Ovary (tissue), 10 donors: ENCODE measurements at regions of chrX and their contacts with region 1.

Region 1: DNA sequence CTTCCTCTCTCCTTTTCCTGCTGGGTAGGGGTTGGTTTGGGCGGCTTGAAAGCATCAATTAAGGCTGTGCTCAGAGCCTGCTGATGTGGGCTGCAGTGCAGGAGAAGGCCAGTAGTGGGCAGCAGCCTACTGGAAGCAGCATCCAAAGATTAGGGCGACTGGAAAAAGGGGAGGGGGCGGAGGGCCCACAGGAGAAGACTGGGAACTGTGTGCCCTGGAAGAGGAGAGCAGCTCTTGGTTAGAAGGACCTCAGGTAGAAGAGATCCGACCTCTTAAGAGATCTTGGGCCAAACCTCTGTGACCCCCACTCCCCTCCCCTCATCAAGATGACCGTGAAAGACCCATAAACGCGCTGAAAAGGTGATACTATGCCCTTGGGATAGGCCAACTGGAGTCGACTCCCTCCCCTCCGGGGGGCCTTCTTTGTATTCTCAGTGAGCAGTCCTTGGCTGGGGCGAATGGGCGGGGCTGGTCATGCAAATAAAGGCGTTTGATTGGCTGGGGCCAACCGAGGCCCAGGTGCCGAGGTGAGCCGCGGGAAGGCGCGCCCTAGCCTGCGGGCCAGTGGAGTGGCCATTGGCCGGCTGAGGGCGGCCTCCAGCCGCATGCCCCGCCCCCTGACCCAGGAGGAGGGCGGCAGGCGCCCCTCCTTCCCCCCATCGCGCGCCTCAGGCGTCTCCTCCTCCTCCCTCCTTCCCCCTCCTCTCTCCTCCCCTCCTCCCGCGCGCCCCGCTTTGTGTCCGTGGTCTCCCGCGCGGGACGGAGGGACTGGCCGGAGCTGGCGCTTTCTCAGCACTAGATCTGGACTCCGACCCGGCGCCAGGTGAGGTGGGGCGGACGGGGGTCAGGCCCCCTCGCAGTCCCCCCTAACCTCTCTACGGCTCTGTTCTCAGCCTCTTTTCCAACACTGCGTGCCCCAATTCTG is 10.1 kb downstream of the DLG3 start:
- DNase-seq: peak; percentile 81 to 85 (median 85)
- H3K4me3 ChIP-seq: peak overlapping the region; percentile 35
- H3K27ac ChIP-seq: peak overlapping the region; percentile 60 to 81
- H3K4me1 ChIP-seq: no peaks in the 10 kb centered on the region
- H3K27me3 ChIP-seq: no peaks in the 10 kb centered on the region
- CTCF ChIP-seq: peak; percentile 49 to 71 (median 70)
- EP300 ChIP-seq: no peak
- POLR2A ChIP-seq: no peak

Region 2: DNA sequence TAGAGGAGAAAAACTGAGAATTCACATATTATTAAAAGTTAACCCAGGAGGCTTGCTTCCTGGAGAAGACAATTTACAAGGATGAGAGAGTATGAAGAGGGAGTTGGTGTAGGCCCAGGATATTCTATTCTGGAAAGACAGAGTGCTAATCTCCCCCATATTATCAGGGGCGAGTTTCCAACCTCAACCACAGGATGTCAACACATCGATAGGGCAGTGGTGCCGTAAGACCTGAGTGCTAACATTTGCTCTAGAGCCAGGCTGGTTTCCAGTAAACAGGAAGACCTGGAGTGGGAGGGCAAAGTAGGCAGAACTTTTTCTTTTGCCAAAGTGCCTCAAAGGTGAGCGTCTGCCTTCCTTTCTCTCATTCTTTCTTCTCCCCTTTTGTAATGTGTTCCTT is 223.0 kb before region 1 on chrX:
- intact Hi-C with region 1: no loop called
- DNase-seq: no peak
- H3K4me3 ChIP-seq: no peak overlapping the region
- H3K27ac ChIP-seq: no peak overlapping the region
- H3K4me1 ChIP-seq: no peaks in the 10 kb centered on the region
- H3K27me3 ChIP-seq: no peaks in the 10 kb centered on the region
- CTCF ChIP-seq: no peak
- EP300 ChIP-seq: no peak
- POLR2A ChIP-seq: no peak

Region 3: GRCh38 chrX:70554081-70554480 is 99.4 kb after region 1 on chrX:
- intact Hi-C with region 1: loop called in 2 of 4 experiments (anchors 10 kb)
- DNase-seq: no peak
- H3K4me3 ChIP-seq: no peak overlapping the region
- H3K27ac ChIP-seq: no peak overlapping the region
- H3K4me1 ChIP-seq: no peaks in the 10 kb centered on the region
- H3K27me3 ChIP-seq: no peaks in the 10 kb centered on the region
- CTCF ChIP-seq: peak in 1 of 3 donors; percentile 24
- EP300 ChIP-seq: no peak
- POLR2A ChIP-seq: no peak